ENCODE measurements at regions of chr16 and their contacts with region 1.

Region 1: DNA sequence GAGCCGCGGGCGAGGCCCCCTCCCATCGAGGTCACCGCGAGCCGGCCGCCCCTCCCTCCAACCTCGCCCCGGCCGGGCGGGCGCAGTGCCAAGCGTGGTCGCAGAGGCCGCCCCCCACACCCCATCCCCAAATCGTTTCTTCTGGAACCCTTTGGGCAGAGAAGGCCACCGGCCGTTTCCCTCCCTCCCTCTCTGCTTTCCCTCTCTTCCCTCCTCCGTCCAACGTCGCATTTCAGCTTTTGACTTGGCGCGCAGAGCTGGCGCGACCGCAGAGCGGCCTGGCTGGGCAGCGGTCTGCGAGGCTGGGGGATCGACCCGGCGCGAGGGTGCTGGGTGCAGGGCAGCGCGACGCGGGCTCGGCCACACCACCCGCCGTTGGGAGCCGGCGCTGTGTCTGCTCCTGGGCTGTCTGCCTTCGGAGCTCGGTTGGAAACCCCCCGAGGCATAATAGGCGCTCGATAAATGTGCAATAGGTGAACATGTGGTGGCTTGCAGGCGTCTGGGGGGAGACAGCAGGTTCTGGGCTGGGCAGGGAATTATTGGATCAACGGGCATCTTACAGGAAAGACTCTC is 2.9 kb upstream of the NTN3 start:
- DNase-seq: peak; percentile 64
- H3K4me3 ChIP-seq: peak overlapping the region; percentile 48
- H3K27ac ChIP-seq: peak overlapping the region; percentile 97
- H3K4me1 ChIP-seq: peaks cover 59% of the 10 kb centered on the region
- H3K27me3 ChIP-seq: no peaks in the 10 kb centered on the region
- CTCF ChIP-seq: no peak

Region 2: GRCh38 chr16:1983053-1983543 is 485.1 kb before region 1 on chr16:
- CTCF ChIA-PET with region 1: no interaction called
- POLR2A ChIA-PET with region 1: interaction called, 13 read pairs
- intact Hi-C with region 1: no loop called
- DNase-seq: no peak
- H3K4me3 ChIP-seq: peak overlapping the region; percentile 81
- H3K27ac ChIP-seq: no peak overlapping the region
- H3K4me1 ChIP-seq: peaks cover 20% of the 10 kb centered on the region
- H3K27me3 ChIP-seq: no peaks in the 10 kb centered on the region
- CTCF ChIP-seq: no peak

Region 3: GRCh38 chr16:2163211-2163881 is 304.9 kb before region 1 on chr16:
- CTCF ChIA-PET with region 1: no interaction called
- POLR2A ChIA-PET with region 1: interaction called, 11 read pairs
- intact Hi-C with region 1: no loop called
- DNase-seq: no peak
- H3K4me3 ChIP-seq: no peak overlapping the region
- H3K27ac ChIP-seq: no peak overlapping the region
- H3K4me1 ChIP-seq: peaks cover 16% of the 10 kb centered on the region
- H3K27me3 ChIP-seq: no peaks in the 10 kb centered on the region
- CTCF ChIP-seq: no peak

Region 4: DNA sequence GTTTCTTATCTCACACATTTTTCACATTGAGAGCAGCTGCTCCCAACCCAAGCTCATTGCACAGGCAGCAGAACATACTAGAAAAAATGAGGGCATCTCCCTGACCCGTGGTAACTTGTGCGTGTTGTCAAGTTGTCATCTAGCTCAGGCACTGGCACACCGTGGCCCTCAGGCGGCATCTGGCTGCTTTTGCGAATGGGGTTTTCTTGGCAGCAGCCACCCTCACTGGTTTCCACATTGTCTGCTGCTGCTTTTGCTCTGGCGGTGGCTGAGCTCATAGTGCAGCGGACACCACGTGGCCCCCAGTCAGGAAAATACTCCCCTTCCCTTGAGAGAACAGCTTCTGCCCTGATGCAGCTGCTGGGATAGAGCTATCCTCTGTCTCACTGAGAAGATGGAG is 17.7 kb before region 1 on chr16:
- CTCF ChIA-PET with region 1: no interaction called
- POLR2A ChIA-PET with region 1: interaction called, 18 read pairs
- intact Hi-C with region 1: no loop called
- DNase-seq: no peak
- H3K4me3 ChIP-seq: no peak overlapping the region
- H3K27ac ChIP-seq: no peak overlapping the region
- H3K4me1 ChIP-seq: no peaks in the 10 kb centered on the region
- H3K27me3 ChIP-seq: no peaks in the 10 kb centered on the region
- CTCF ChIP-seq: no peak

Measured in A673 (cell line).